Activated T-helper 1 cell treated with anti-CD3 and anti-CD28 coated beads, Interleukin-12 subunit alpha, Interleukin-12 subunit beta, Interleukin-2, Interleukin-4 antibody, amounts not matched to agents 30 ng/mL and 10 ng/mL and 1 ng/mL, durations not matched to agents 14 hours and 24 hours and 36 hours (primary cell): ENCODE measurements at regions of chr6 and their contacts with region 1.

Region 1: DNA sequence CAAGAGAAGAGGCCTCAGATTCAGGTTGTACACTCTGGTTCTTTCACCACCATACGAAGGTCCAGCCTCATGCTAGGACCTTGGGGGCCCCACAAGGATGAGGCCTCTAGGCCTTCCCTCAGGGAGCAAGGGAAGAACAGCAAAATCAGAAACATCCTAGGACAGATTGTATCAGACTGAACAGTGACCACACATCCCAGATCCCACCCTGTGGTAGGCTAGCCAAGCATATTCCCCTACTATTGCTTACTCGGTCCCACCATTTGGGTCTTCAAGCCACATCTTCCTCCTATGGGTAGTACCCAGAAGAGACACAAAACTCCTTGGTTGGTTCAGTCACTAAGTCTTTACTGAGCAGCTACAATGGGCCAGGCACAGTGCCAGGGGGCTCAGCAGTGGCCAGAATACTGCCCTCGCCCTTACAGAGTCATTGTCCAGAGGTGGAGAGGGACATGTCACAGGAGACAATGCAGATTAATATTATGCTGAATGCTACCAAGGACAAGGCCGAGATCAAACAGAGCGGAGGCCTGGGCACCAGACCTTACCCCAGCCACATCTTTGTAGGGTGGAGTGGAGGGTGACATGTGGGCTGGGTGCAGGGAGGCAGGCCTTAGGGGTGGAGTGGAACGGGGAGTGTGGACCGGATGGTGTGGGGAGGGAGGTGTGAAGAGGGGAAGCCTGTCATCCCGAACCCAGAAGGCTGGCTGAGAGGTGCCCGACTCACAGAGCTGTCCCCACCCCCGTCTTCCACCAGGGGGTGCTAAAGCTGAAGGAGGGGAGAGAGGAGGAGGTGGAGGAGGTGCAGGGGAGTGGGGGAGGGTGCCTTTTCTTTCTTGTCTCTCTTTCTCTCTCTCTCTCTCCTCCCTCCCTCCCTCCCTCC is 6.8 kb upstream of the MAPK13 start:
- DNase-seq: peak; percentile 88
- H3K4me3 Mint-ChIP-seq: peak overlapping the region; percentile 0
- H3K27ac Mint-ChIP-seq: peak overlapping the region; percentile 74
- H3K4me1 Mint-ChIP-seq: peaks cover 89% of the 10 kb centered on the region
- H3K27me3 Mint-ChIP-seq: no peaks in the 10 kb centered on the region

Region 2: GRCh38 chr6:36169023-36170007 is 45.8 kb after region 1 on chr6:
- intact Hi-C with region 1: loop called (anchors 2 kb)
- DNase-seq: no peak
- H3K4me3 Mint-ChIP-seq: peak overlapping the region; percentile 20
- H3K27ac Mint-ChIP-seq: peak overlapping the region; percentile 64
- H3K4me1 Mint-ChIP-seq: peaks cover 27% of the 10 kb centered on the region
- H3K27me3 Mint-ChIP-seq: peaks cover 2% of the 10 kb centered on the region

Region 3: GRCh38 chr6:36360241-36361054 is 236.9 kb after region 1 on chr6:
- intact Hi-C with region 1: loop called (anchors 1 kb)
- DNase-seq: peak; percentile 56
- H3K4me3 Mint-ChIP-seq: no peak overlapping the region
- H3K27ac Mint-ChIP-seq: no peak overlapping the region
- H3K4me1 Mint-ChIP-seq: peaks cover 45% of the 10 kb centered on the region
- H3K27me3 Mint-ChIP-seq: peaks cover 16% of the 10 kb centered on the region

Region 4: GRCh38 chr6:36546920-36547645 is 423.6 kb after region 1 on chr6 and contains the start of gene STK38:
- intact Hi-C with region 1: loop called (anchors 10 kb)
- DNase-seq: peak; percentile 84
- H3K4me3 Mint-ChIP-seq: peak within 1 kb of the TSS; percentile 95
- H3K27ac Mint-ChIP-seq: peak within 1 kb of the TSS; percentile 92
- H3K4me1 Mint-ChIP-seq: peaks cover 50% of the 10 kb centered on the region
- H3K27me3 Mint-ChIP-seq: peaks cover 2% of the 10 kb centered on the region
- total RNA-seq, gene STK38: 23.5 and 23.6 TPM in 2 replicates